ENCODE measurements at regions of chr14 and their contacts with region 1.

Region 1: GRCh38 chr14:93959239-93960107 is 16.9 kb downstream of the ASB2 start:
- DNase-seq: peak; percentile 98
- H3K4me3 Mint-ChIP-seq: peak overlapping the region; percentile 78
- H3K27ac Mint-ChIP-seq: peak overlapping the region; percentile 100
- H3K4me1 Mint-ChIP-seq: peaks cover 94% of the 10 kb centered on the region
- H3K27me3 Mint-ChIP-seq: no peaks in the 10 kb centered on the region

Region 2: DNA sequence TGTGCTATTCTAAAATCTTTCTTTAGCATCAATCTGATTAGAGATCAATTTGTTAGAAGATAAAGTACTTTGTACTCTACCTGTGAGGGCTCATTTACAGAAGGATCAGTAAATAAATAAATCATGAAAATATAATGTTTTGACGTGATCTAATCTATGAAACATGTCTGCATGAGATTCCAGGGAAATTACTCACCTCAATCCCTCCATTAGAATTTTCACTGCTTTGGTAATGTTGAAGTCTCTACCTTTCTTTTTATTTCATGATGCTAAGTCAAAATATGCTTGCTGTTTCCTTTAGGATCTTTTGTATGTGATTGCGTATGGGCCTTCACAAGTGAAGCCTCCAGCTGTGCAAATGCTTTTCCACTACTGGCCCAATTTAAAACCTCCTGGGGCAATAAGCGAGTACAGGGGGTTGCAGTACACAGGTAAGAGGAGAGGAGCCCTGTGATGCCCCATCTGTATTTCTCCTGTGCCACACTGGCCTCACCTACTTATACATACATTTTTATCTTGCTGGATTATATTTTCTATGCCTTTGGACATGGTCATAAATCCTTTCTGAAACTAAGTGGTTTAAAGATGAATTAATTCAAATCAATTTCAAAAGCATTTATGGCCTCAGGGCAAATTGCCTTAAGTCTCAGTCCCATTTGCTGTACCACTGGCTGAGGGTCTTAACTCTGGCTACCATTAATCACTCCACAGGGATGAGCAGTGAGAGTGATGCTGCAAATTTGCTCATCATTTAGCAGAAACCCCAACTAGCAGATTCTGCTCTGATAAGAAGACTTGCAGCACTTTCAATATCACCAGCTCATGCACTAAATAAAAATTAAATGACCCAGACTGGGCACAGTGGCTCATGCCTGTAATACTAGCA is 462.4 kb before region 1 on chr14:
- CTCF ChIA-PET with region 1: no interaction called
- POLR2A ChIA-PET with region 1: no interaction called
- intact Hi-C with region 1: no loop called
- DNase-seq: no peak
- H3K4me3 Mint-ChIP-seq: no peak overlapping the region
- H3K27ac Mint-ChIP-seq: no peak overlapping the region
- H3K4me1 Mint-ChIP-seq: no peaks in the 10 kb centered on the region
- H3K27me3 Mint-ChIP-seq: peaks cover 4% of the 10 kb centered on the region

Region 3: DNA sequence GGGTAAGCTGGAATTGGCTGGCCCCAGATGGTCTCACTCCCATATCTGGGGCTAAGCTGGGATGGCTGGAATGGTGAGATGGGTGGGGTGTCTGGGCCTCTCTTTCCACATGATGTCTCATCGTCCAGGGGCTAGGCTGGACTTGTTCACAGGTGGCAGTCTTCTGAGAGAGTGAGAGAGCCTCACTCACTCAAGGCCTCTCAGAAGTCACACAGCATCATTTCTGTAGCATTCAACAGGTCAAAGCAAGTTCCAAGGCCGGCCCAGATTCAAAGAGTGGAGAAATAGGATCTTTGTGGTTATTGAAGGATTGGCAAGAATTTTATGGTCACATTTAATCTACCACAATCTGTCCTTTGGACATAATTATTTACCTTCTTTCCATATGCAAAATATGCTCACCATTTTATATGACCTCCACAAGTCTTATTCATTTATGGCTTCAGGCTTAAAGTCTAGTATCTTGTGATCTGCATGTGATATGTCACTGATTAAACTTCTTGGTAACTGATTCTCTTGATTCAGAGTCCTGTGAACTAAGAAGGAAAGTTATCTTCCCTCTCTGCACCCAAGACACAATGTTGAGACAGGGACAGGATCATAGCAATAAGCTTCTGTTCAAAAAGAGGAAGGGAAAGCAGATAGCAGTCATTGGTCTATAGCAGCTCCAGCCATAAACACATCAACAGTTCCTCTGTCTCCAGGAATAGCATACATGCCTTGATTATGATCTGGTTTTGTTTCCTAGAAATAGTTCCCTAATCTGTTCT is 425.8 kb before region 1 on chr14:
- CTCF ChIA-PET with region 1: no interaction called
- POLR2A ChIA-PET with region 1: no interaction called
- intact Hi-C with region 1: no loop called
- DNase-seq: no peak
- H3K4me3 Mint-ChIP-seq: no peak overlapping the region
- H3K27ac Mint-ChIP-seq: no peak overlapping the region
- H3K4me1 Mint-ChIP-seq: no peaks in the 10 kb centered on the region
- H3K27me3 Mint-ChIP-seq: peaks cover 4% of the 10 kb centered on the region

Region 4: DNA sequence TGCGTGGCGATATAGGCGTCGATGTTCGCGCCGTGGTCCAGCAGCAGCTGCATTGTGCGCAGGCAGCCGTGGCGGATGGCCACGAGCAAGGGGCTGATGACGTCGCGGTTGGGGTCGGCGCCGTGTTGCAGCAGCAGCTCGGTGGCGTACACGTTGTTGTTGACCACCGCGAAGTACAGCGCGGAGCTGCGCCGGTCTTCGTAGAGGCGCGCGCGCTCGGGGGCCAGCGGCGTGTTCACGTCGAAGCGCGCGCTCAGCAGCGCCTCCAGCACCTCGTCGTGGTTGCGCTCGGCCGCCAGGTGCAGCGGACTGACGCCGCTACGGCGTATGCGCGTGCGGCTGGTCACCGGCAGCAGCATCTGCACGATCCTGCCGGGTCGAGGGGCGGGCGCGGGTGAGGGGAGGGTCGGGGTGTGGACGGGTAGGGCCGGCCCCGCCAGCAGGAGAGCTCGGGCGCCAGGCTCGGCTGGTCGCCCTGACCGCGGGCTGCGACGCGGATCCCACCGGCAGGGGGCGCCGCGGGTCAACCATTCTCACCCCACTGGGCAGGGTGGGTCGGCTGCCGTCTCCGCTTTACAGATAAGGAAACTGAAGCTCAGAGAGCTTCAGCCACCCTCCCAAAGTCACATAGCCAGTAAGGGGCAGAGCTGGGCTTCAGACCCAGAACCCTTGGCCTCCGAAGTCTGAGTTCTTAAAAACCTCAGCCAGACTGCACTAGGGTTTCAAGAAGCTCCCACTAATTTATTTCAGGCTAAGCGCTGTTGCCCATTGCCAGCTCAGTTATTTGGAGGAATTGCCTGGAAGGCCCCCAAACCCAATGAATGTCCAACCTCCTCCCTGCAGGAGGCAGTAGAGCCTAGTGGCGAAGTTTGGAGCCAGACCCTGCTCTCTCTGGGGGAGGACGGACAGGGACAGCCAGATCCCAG is 19.9 kb before region 1 on chr14:
- CTCF ChIA-PET with region 1: interaction called, 318 read pairs
- POLR2A ChIA-PET with region 1: interaction called, 18 read pairs
- intact Hi-C with region 1: loop called (anchors 1 kb)
- DNase-seq: peak; percentile 94
- H3K4me3 Mint-ChIP-seq: peak overlapping the region; percentile 61
- H3K27ac Mint-ChIP-seq: peak overlapping the region; percentile 56
- H3K4me1 Mint-ChIP-seq: peaks cover 13% of the 10 kb centered on the region
- H3K27me3 Mint-ChIP-seq: no peaks in the 10 kb centered on the region

Region 5: DNA sequence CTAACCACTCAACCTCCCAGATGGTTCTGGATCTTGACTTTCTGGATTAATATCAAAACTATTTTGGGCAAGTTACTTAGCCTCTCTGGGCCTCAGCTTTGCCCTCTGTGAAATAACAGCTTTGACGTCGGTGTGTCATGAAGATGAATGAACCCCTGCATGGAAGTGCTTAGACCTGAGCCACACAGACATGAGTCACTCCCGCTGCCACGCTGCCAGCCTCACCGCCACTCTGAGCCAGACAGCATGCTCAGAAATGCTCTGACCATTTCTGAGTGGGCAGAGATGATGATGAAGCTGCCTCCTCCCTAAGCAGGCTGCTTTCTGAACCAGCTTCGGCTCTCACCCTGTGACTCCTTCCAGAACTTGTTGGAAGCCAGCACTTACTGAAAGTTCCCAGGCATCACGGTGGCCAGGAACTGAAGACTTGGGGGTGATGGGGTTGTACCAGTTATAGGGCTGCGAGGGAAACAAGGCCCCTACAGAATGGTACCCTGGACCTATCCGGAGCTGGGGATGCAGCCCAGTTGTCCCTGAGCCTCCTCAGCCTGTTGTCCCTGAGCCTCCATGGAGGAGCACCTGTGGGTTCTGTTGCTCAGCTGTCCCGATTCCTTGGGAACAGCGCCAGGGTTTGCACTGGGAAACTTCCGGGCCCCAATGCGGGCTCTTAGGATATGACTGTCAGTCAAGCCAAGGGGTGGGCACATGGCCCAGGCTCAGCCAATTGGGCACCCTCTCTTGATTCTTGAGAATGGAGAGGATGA is 35.6 kb after region 1 on chr14:
- CTCF ChIA-PET with region 1: interaction called, 4 read pairs
- POLR2A ChIA-PET with region 1: interaction called, 17 read pairs
- intact Hi-C with region 1: loop called (anchors 1 kb)
- DNase-seq: peak; percentile 86
- H3K4me3 Mint-ChIP-seq: no peak overlapping the region
- H3K27ac Mint-ChIP-seq: peak overlapping the region; percentile 54
- H3K4me1 Mint-ChIP-seq: peaks cover 35% of the 10 kb centered on the region
- H3K27me3 Mint-ChIP-seq: no peaks in the 10 kb centered on the region

Region 6: GRCh38 chr14:94026173-94026888 is 66.9 kb after region 1 on chr14 and contains the start of gene OTUB2:
- CTCF ChIA-PET with region 1: interaction called, 4 read pairs
- POLR2A ChIA-PET with region 1: interaction called, 11 read pairs
- intact Hi-C with region 1: loop called (anchors 1 kb)
- DNase-seq: peak; percentile 99
- H3K4me3 Mint-ChIP-seq: peak within 1 kb of the TSS; percentile 64
- H3K27ac Mint-ChIP-seq: no peak within 1 kb of the TSS
- H3K4me1 Mint-ChIP-seq: peaks cover 43% of the 10 kb centered on the region
- H3K27me3 Mint-ChIP-seq: no peaks in the 10 kb centered on the region
- total RNA-seq, gene OTUB2: 2.0 to 2.9 TPM

Region 7: GRCh38 chr14:94161981-94162380 is 202.5 kb after region 1 on chr14:
- CTCF ChIA-PET with region 1: no interaction called
- POLR2A ChIA-PET with region 1: no interaction called
- intact Hi-C with region 1: loop called (anchors 5 kb)
- DNase-seq: peak; percentile 32
- H3K4me3 Mint-ChIP-seq: no peak overlapping the region
- H3K27ac Mint-ChIP-seq: peak overlapping the region; percentile 55
- H3K4me1 Mint-ChIP-seq: peaks cover 81% of the 10 kb centered on the region
- H3K27me3 Mint-ChIP-seq: no peaks in the 10 kb centered on the region

Region 8: DNA sequence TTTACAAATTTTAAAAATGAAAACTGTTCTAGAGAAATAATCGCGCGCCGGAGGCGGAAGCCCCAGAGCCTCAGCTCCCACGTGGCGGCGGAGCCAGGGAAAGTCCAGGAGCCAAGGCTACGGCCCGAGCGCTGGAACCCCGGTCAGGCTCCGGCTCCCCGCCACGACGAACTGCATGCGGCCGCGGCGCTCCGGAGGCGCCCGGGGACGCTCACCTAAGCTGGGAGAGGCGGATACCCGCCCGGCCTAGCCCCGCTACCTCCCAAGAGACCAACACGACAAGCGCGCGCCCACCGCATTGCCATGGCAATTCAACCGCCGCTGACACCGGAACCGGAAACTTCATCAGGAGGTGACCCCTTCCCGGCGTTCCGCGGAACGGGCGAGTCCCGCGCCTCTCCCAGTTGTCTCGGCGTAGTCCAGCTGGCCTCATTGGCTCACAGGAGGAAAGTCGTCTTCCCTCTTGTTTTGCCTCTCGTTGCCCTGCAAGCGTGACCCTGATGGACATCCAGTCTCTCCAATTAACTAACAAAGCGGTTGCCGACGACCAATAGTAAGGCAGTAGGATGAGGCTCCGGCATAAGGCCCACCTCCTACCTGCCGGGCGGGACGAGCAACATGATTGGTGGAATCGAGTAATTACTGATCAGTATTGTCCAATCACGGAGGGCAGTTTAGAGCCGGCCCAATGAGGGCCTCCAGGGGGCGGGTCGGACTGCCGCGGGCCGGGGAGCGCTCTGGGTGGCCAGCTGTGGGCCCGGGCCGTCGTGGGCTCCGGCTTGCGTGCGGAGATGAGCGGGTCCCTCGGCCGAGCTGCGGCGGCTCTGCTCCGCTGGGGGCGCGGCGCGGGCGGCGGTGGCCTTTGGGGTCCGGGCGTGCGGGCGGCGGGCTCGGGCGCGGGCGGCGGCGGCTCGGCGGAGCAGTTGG is 1575.1 kb after region 1 on chr14 and contains the start of gene GLRX5:
- CTCF ChIA-PET with region 1: no interaction called
- POLR2A ChIA-PET with region 1: no interaction called
- intact Hi-C with region 1: loop called (anchors 5 kb)
- DNase-seq: peak; percentile 98
- H3K4me3 Mint-ChIP-seq: peak within 1 kb of the TSS; percentile 93
- H3K27ac Mint-ChIP-seq: peak within 1 kb of the TSS; percentile 93
- H3K4me1 Mint-ChIP-seq: peaks cover 52% of the 10 kb centered on the region
- H3K27me3 Mint-ChIP-seq: no peaks in the 10 kb centered on the region
- total RNA-seq, gene GLRX5: 31.8 to 32.2 TPM

Measured in activated CD4-positive, alpha-beta memory T cell treated with anti-CD3 and anti-CD28 coated beads for 36 hours (primary cell).